Sigmoid colon (tissue), 7 donors: ENCODE measurements at regions of chr12 and their contacts with region 1.

Region 1: DNA sequence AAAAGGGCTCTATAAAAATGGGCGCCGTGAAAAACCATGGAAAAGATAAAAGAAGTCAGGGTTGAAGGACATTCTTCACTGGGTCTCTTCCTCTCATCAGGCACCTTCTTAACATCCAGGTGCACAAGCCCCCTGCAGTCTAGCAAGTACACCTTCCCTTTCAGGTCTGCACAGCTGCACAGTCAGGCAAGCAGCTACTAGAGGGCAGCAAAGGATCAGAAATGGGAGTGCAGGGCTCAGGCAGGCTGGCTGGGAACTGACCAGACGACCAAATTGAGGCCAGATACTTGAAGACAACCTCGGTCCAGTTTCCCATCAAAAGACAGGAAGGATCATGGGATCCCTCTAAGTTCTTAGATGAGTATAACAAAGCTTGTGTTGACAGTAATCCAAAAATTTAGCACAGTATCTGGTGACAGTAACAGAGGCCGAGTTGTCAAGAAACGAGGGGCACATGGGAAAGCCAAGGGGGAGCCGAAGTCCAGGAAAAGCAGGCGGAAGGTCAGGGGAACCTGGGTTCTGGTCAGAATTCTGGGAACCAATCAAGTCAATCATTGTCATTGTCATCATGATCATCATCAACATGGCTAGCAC is 10.1 kb upstream of the GRIP1 start:
- DNase-seq: no peak
- H3K4me3 ChIP-seq: no peak overlapping the region
- H3K27ac ChIP-seq: no peak overlapping the region
- H3K4me1 ChIP-seq: no peaks in the 10 kb centered on the region
- H3K27me3 ChIP-seq: no peaks in the 10 kb centered on the region
- CTCF ChIP-seq: peak in 2 of 4 experiments; percentile 6 to 38
- EP300 ChIP-seq: no peak
- POLR2A ChIP-seq: no peak

Region 2: DNA sequence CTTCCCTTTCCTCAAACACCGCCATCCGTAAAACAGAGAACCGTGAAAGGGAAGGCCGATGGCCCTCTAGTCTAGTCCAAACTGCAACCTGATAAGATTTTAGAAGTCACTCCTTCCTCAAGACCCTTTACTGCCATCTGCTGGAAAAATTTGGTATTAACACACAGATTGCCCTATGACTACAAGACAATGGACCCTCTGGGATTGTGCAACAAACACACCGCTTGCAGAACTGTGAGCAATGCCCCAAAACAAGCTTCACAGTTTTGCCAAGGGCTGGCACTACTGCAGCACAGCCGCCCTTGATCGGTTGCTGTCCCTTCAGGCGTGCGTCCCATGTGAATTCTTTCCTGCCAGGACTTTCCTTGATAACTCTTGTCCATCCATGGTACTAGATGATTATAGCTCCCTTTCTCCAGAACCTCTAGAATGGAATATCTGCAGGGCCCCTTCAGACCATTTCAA is 581.5 kb before region 1 on chr12:
- intact Hi-C with region 1: no loop called
- DNase-seq: peak; percentile 65
- H3K4me3 ChIP-seq: no peak overlapping the region
- H3K27ac ChIP-seq: no peak overlapping the region
- H3K4me1 ChIP-seq: no peaks in the 10 kb centered on the region
- H3K27me3 ChIP-seq: no peaks in the 10 kb centered on the region
- CTCF ChIP-seq: peak; percentile 54 to 83 (median 61)
- EP300 ChIP-seq: no peak
- POLR2A ChIP-seq: no peak

Region 3: DNA sequence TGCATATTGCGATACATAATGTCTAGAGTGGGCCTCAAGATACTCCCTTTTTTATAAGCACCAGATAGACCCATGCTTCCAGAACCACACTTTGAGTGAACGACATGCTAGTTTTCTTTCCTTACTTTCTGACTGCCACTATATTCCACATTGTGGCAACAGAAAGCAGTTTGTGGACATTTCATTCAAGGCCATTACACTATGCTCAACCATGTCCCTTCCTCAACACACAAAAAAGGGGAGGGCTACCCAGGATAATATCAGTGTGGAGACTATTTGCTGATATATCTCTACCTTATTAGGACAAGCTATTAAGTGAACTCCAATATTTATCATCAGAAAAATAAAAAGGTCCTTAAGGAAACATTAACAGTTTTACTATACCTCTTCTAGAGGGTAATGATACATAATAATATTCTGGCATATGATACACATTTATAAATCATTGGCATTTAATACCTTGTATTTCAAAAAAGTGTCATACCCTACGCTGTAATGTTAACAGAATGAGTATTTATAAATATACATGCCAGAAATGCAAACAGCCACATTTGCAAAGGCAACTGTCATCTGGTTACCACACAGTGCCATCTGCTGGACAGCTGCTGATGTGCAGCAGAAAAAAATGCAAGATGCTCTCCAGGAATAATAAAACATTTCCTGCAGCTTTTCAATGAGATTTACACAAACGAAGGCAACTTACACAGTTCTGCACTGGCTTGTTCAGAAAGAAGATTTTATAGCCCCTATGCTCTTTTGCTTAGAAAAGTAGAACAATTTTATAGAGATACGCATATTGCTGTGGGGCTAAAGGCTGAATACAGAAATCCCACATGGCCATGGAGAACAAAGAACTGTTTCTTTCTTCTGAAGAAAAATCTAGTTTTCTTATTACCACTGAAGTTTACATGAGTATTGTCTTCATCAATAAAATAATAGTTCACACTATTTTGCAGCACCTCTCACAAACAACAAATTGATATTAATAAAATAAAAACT is 172.1 kb after region 1 on chr12:
- intact Hi-C with region 1: loop called (anchors 1 kb)
- DNase-seq: peak; percentile 63
- H3K4me3 ChIP-seq: no peak overlapping the region
- H3K27ac ChIP-seq: no peak overlapping the region
- H3K4me1 ChIP-seq: peaks cover 0 to 24% (median 8%) of the 10 kb centered on the region in 4 donors
- H3K27me3 ChIP-seq: no peaks in the 10 kb centered on the region
- CTCF ChIP-seq: peak; percentile 58 to 84 (median 66)
- EP300 ChIP-seq: no peak
- POLR2A ChIP-seq: no peak